PC-3 (cell line): ENCODE measurements at regions of chr1 and their contacts with region 1.

Region 1: GRCh38 chr1:10217748-10218441 is 7.5 kb downstream of the KIF1B start:
- DNase-seq: no peak
- ATAC-seq: no peak; the same call in 1 of the 2 replicates
- H3K4me3 ChIP-seq: no peak overlapping the region
- H3K27ac ChIP-seq: no peak overlapping the region
- H3K4me1 ChIP-seq: peaks cover 5% of the 10 kb centered on the region; the same call in 1 of the 2 replicates
- H3K27me3 ChIP-seq: no peaks in the 10 kb centered on the region
- CTCF ChIP-seq: no peak

Region 2: DNA sequence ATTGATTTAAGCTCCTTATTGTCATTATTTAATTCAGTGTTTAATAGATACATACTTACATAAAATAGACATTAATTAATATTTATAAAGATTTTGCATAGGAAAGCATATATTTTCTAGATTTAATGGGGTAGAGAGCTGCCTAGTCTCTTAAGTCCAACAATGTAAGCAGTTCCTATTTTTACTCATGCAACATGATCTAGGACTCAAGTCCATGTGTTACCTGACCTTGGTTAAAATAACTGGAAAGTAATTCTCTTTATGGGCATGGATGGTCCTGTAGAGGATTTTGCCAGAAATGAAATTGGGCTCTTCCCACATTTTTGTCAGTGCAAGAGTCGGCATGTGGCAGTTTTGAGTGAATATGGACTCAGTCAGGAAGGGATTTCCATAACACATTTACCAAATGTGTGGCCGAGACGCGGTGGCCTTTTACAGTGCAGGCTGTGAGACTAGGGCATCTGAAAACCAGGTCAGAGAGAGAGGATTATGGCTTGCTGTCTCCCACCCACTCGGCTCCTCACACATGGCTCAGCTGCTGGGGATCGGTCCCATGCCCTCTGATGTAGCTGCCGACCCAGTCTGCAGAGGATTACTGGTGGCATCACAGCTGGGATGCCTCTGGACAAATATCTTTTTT is 13.8 kb before region 1 on chr1:
- CTCF ChIA-PET with region 1: no interaction called
- POLR2A ChIA-PET with region 1: no interaction called
- intact Hi-C with region 1: no loop called
- DNase-seq: no peak
- ATAC-seq: no peak
- H3K4me3 ChIP-seq: no peak overlapping the region
- H3K27ac ChIP-seq: no peak overlapping the region
- H3K4me1 ChIP-seq: peaks cover 1% of the 10 kb centered on the region
- H3K27me3 ChIP-seq: no peaks in the 10 kb centered on the region
- CTCF ChIP-seq: no peak

Region 3: DNA sequence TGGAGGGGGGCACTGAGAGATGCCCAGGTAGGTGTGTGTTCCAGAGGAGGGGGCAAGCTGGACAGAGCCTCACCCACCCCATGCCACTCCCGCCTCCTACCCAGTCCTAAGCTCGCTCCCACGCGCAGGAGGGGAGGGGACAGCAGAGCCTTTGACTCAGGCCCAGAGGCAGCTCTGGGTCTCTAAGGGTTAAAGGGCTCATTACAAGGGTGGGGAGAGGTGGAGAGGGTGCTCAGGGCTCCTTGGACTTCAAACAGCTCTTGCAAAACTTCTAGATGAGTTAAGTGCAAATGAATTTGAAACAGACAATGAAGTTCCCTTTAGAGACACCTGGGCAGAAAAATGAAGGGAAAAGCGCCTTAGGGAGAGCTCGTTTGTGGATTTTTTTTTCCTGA is 682.8 kb after region 1 on chr1:
- CTCF ChIA-PET with region 1: no interaction called
- POLR2A ChIA-PET with region 1: interaction called, 10 read pairs
- intact Hi-C with region 1: no loop called
- DNase-seq: peak; percentile 57
- ATAC-seq: peak; percentile 16; the same call in 1 of the 2 replicates
- H3K4me3 ChIP-seq: peak overlapping the region; percentile 50
- H3K27ac ChIP-seq: peak overlapping the region; percentile 90
- H3K4me1 ChIP-seq: peaks cover 44% of the 10 kb centered on the region
- H3K27me3 ChIP-seq: no peaks in the 10 kb centered on the region
- CTCF ChIP-seq: no peak